ENCODE measurements at regions of chr5 and their contacts with region 1.

Region 1: DNA sequence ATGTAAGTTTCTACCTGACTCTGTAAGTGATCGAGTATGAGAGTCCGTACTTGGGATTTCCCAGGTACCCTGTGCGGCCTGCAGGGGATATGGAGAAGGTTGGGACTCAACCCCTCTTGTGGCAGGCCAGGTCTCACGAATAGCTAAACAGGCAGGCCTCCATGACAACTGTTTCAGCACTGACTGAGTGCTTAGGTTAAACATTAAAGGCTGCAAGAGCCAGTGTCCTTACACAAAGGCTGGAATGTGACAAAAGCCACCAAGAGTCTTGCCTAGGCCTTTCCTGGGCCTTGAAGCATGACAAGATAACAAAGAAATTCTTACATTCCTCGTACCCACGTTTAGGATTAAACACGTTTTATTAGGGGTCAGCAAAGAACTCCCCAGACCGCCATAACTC is 58.6 kb downstream of the THBS4 start:
- DNase-seq: no peak
- CTCF ChIP-seq: no peak

Region 2: GRCh38 chr5:80076112-80077050 is 17.4 kb before region 1 on chr5:
- CTCF ChIA-PET with region 1: interaction called, 27 read pairs
- POLR2A ChIA-PET with region 1: no interaction called
- DNase-seq: no peak
- CTCF ChIP-seq: no peak

Region 3: GRCh38 chr5:80275347-80275746 is 181.6 kb after region 1 on chr5:
- CTCF ChIA-PET with region 1: interaction called, 14 read pairs
- POLR2A ChIA-PET with region 1: no interaction called
- DNase-seq: no peak
- CTCF ChIP-seq: peak; percentile 39

Region 4: GRCh38 chr5:80289320-80289719 is 195.5 kb after region 1 on chr5:
- CTCF ChIA-PET with region 1: interaction called, 12 read pairs
- POLR2A ChIA-PET with region 1: no interaction called
- DNase-seq: no peak
- CTCF ChIP-seq: no peak

Region 5: DNA sequence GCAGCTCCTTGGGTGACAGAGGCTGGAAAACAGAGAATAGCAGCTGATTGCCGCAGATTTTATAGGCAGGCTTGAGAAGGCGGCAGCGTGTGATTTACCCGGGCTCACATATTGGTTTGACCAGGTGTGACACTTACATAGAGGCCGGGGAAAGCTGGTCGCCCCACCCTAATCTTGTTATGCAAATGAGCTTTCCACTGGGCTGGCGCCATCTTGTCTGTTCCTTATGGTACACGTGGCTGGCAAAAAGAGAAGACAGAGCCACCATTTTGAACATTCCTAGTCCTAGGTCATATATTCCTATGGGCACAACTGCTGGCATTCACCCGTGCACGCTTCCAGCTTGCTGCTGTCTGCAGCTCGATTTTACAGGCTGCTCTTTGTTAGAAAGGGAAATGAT is 214.7 kb after region 1 on chr5:
- CTCF ChIA-PET with region 1: interaction called, 124 read pairs
- POLR2A ChIA-PET with region 1: no interaction called
- DNase-seq: no peak
- CTCF ChIP-seq: no peak